GM13977 (cell line): ENCODE measurements at regions of chr1 and their contacts with region 1.

Region 1: DNA sequence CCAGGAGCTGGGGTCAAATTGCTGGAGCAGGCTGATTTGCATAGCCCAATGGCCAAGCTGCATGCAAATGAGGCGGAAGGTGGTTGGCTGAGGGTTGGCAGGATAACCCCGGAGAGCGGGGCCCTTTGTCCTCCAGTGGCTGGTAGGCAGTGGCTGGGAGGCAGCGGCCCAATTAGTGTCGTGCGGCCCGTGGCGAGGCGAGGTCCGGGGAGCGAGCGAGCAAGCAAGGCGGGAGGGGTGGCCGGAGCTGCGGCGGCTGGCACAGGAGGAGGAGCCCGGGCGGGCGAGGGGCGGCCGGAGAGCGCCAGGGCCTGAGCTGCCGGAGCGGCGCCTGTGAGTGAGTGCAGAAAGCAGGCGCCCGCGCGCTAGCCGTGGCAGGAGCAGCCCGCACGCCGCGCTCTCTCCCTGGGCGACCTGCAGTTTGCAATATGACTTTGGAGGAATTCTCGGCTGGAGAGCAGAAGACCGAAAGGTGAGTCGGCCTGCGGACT is at the start of gene GADD45A:
- DNase-seq: peak; percentile 96
- CTCF ChIP-seq: no peak

Region 2: DNA sequence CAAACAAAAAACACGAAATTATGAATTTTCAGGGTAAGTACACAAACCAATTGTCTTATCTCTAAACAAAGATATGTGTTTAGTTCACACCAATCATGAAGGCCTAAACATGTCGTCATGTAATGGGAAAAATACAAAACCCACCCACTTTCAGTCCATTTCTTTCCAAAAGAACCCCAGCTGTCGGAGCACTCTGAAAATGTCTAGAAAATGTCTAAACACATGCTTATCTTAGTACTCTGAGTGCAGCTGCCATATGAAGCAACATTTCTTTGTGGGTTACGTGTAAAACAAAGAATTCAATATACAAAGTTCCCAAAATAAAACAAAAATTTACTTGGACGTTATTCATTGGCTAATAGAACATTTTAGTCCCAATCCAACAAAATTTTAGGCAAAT is 277.6 kb before region 1 on chr1:
- in situ Hi-C with region 1: no loop called
- DNase-seq: no peak
- CTCF ChIP-seq: no peak

Region 3: DNA sequence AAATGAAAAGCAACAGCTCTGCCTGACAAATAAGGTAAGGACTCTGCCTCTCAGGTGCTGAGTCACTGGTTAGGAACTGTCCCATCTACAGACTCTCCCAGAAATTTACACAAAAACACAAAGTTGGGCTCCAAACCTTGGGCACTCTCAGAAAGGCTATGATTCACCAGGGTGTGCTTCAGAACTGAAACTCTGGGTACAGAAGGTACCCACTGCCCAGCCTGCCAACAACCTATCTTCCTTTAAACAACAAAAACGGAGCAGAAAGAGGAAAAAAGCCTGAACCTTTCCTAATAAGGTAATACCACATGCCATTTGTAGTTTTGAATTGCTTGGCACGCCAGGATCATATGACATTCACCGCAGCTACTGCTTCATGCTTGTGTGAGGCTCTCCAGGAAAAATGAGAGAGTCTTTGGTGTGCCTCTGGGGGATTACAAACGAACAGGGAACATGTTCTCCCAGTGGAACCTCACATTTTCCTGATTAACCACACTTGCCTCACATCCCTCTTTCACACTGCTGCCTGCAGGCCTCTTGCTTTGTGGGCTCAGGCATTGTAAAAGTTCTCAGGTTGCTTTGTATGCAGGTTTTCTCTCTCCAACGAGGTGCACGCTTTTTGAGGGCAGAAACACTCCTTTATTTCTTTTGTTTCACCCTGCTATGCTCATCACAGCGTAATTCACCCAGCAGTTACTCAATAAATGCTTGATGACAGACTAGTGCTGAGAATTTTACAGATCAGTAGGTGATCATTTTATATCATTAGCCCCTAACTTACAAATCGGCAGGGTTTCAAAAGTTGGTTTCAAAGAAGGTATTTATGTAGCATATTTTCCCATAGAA is 65.0 kb after region 1 on chr1:
- in situ Hi-C with region 1: loop called (anchors 5 kb)
- DNase-seq: no peak
- CTCF ChIP-seq: no peak